Aorta (tissue), 5 donors: ENCODE measurements at regions of chr2 and their contacts with region 1.

Region 1: DNA sequence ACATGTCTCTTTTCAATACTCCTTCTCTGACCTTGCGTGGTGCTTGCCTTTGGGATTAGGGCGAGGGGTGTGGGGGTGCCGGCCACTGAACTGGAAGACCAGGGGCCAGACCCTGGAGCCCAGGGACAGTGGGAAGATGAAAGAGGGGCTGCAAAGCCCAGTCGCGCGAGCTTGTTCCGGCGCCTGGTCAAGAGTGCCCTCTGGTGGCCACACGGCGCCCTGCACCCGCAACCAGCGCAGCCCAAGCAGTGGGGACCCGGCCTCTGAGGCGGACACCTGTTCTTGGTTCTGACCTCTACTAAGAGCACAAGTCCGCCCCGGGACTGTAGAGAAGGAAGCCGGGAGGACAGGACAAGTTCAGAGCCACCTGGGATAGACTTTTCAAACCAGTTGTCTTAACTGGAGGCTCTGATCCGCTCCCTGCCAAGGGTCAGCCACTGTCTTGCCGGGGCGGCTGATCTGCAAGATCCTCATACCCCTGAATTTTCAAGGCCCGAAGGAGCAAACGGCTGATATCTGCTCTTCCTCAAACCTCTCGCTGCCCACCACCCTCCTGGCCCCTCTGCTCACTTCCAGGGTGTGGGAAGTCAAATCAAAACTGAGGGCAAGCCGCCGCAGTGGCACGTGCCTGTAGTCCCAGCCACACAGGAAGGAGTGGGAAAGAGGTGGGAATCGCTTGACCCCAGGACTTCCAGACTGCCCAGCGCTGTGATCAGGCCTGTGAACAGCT is 14.9 kb upstream of the MSH6 start:
- DNase-seq: peak; percentile 75 to 92
- ATAC-seq: peak; percentile 91
- H3K4me3 ChIP-seq: no peak overlapping the region
- H3K27ac ChIP-seq: no peak overlapping the region
- H3K4me1 ChIP-seq: no peaks in the 10 kb centered on the region
- H3K27me3 ChIP-seq: no peaks in the 10 kb centered on the region

Region 2: GRCh38 chr2:47334356-47335136 is 433.5 kb before region 1 on chr2:
- intact Hi-C with region 1: loop called (anchors 5 kb)
- DNase-seq: peak in 1 of 2 donors; percentile 26
- ATAC-seq: no peak
- H3K4me3 ChIP-seq: no peak overlapping the region
- H3K27ac ChIP-seq: no peak overlapping the region
- H3K4me1 ChIP-seq: no peaks in the 10 kb centered on the region
- H3K27me3 ChIP-seq: no peaks in the 10 kb centered on the region

Region 3: DNA sequence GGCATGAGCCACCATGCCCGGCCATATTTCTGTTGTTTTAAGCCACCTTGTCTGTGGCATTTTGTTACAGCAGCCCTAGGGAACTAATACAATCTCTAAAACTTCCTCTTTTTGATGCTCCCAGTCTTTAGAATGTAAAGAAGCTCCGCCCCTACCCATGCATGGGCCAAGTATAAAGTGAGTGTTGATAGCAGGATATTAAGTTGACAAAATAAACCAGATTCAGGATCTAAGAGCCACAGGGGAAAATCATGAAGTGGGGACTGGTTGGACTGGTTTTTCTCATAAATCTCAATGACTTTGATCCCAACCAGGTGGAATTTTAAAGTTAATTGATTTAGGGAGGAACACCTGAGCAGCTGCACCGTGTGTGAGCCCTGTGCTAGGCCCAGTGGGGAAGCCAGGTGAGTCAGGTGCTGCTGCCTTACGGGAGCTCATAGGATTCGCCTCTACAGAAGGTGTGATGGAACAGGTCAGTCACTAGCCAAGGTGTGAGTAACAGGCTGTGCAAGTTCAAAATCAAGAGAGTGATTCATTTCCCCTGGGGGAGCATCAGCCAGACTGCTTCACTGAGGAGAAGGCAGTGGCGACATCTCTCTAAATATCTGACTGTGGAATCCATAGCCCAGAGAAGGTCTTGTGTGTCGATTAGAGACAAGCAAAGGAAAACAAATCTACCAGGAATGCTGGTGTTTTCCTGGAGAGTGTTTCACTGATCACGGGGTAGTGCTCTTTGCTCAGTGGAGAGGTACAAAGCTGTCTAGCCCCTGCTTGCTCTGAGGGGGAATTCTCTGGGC is 428.1 kb before region 1 on chr2:
- intact Hi-C with region 1: loop called in 1 of 2 experiments (anchors 5 kb)
- DNase-seq: no peak
- ATAC-seq: no peak
- H3K4me3 ChIP-seq: no peak overlapping the region
- H3K27ac ChIP-seq: no peak overlapping the region
- H3K4me1 ChIP-seq: no peaks in the 10 kb centered on the region
- H3K27me3 ChIP-seq: no peaks in the 10 kb centered on the region

Region 4: DNA sequence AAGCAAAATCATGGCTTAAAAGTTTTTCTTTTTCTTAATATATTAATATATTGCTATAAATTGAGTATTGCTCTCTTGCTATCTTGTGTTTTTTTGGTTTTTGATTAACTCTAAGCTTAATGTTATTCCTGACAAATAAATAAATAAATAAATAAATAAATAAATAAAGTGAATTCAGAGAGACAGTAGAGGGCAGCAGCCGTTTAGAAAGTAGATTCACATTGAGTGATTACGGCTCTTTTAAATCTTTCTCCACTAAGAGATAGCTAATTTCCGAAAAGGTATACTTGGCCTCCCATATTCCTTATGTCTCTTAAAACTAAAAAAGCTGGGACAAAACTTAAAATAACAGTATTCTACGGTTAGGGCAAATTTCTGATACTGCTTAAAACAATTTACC is 330.8 kb before region 1 on chr2:
- intact Hi-C with region 1: loop called (anchors 2 kb)
- DNase-seq: no peak
- ATAC-seq: no peak
- H3K4me3 ChIP-seq: no peak overlapping the region
- H3K27ac ChIP-seq: no peak overlapping the region
- H3K4me1 ChIP-seq: peaks cover 1 to 3% of the 10 kb centered on the region in 2 donors
- H3K27me3 ChIP-seq: no peaks in the 10 kb centered on the region

Region 5: GRCh38 chr2:48471048-48471474 is 703.0 kb after region 1 on chr2:
- intact Hi-C with region 1: no loop called
- DNase-seq: no peak
- ATAC-seq: peak; percentile 74
- H3K4me3 ChIP-seq: no peak overlapping the region
- H3K27ac ChIP-seq: no peak overlapping the region
- H3K4me1 ChIP-seq: no peaks in the 10 kb centered on the region
- H3K27me3 ChIP-seq: no peaks in the 10 kb centered on the region